ENCODE measurements at regions of chr2 and their contacts with region 1.

Region 1: DNA sequence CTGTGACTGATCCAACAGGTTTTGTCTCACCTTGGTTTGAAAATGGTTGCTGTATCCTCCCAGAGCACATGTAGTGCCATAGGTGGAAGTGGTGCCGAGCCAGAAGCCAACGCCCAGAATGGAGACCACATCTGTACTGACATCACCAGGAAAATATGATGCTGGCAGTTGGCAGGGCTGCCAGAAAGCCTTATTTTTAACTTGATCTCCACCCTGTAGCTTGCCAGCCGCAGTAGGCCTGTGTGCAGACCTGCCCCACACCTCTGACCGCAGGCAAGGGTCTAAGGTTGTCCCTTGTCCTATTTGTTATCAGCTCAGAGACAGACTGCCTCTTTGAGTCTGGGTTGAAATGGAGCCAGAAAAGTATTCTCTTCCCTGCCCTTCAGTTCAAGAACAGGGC is 123.5 kb upstream of the EML6 start:
- DNase-seq: no peak
- ATAC-seq: peak; percentile 27
- H3K4me3 ChIP-seq: no peak overlapping the region
- H3K27ac ChIP-seq: no peak overlapping the region
- H3K4me1 ChIP-seq: peaks cover 96% of the 10 kb centered on the region
- H3K27me3 ChIP-seq: no peaks in the 10 kb centered on the region
- CTCF ChIP-seq: no peak
- EP300 ChIP-seq: no peak
- POLR2A ChIP-seq: no peak
- RAD21 ChIP-seq: no peak

Region 2: GRCh38 chr2:54589340-54590215 is 10.3 kb before region 1 on chr2:
- CTCF ChIA-PET with region 1: no interaction called
- POLR2A ChIA-PET with region 1: interaction called, 14 read pairs
- in situ Hi-C with region 1: no loop called
- intact Hi-C with region 1: no loop called
- DNase-seq: peak; percentile 98
- ATAC-seq: peak; percentile 91
- H3K4me3 ChIP-seq: peak overlapping the region; percentile 22 to 55 (median 28)
- H3K27ac ChIP-seq: peak overlapping the region; percentile 92
- H3K4me1 ChIP-seq: peaks cover 90% of the 10 kb centered on the region
- H3K27me3 ChIP-seq: no peaks in the 10 kb centered on the region
- CTCF ChIP-seq: no peak
- EP300 ChIP-seq: peak; percentile 71 to 84
- POLR2A ChIP-seq: peak; percentile 39 to 57; a peak in 3 of 4 replicates
- RAD21 ChIP-seq: no peak

Measured in HepG2 (cell line).